Activated CD4-positive, alpha-beta T cell treated with anti-CD3 and anti-CD28 coated beads, Interleukin-2, amount 10 ng/mL, durations not matched to agents 24 days and 14 days (primary cell): ENCODE measurements at regions of chr3 and their contacts with region 1.

Region 1: GRCh38 chr3:130892759-130893375 is 1.0 kb upstream of the ATP2C1 start:
- DNase-seq: peak; percentile 91
- H3K4me3 Mint-ChIP-seq: peak overlapping the region; percentile 97
- H3K27ac Mint-ChIP-seq: peak overlapping the region; percentile 99
- H3K4me1 Mint-ChIP-seq: peaks cover 33% of the 10 kb centered on the region
- H3K27me3 Mint-ChIP-seq: no peaks in the 10 kb centered on the region

Region 2: DNA sequence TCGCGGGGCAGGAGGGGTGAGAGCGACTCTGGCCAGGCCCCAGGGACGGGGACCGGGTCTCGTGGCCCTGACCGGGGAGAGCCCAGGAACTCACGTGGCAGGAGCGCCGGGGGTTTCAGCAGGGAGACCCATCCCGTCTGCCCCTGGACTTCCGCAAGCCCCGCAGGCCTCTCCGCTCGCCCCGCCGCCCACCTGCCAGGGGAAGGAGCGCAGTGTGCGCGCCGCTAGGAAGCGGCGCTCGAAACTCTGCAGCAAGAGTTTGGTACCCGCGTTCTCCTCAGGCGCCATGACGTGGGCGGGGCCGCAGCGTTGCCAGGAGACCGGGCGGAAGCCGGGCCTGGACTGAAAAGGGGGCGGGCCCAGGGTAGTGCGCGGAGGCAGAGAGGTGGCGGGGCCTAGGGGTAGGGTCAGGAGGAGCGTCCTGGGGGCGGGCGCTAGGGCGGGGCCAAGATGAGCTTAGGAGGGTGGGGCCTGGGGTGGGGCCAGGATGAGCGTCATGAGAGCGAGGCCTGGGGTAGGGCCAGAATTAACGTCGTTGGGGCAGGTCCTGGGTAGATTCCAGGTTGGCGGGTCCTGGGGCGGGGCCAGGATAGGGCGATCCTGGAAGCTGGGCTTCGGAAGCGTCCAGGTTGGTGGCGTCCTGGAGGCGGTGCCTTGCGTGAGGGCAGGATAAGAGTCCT is 781.5 kb before region 1 on chr3:
- intact Hi-C with region 1: loop called (anchors 5 kb)
- DNase-seq: peak; percentile 100
- H3K4me3 Mint-ChIP-seq: peak overlapping the region; percentile 97
- H3K27ac Mint-ChIP-seq: peak overlapping the region; percentile 99
- H3K4me1 Mint-ChIP-seq: peaks cover 13% of the 10 kb centered on the region
- H3K27me3 Mint-ChIP-seq: peaks cover 2% of the 10 kb centered on the region

Region 3: GRCh38 chr3:130626049-130626448 is 266.8 kb before region 1 on chr3:
- intact Hi-C with region 1: no loop called
- DNase-seq: no peak
- H3K4me3 Mint-ChIP-seq: no peak overlapping the region
- H3K27ac Mint-ChIP-seq: no peak overlapping the region
- H3K4me1 Mint-ChIP-seq: no peaks in the 10 kb centered on the region
- H3K27me3 Mint-ChIP-seq: no peaks in the 10 kb centered on the region

Region 4: DNA sequence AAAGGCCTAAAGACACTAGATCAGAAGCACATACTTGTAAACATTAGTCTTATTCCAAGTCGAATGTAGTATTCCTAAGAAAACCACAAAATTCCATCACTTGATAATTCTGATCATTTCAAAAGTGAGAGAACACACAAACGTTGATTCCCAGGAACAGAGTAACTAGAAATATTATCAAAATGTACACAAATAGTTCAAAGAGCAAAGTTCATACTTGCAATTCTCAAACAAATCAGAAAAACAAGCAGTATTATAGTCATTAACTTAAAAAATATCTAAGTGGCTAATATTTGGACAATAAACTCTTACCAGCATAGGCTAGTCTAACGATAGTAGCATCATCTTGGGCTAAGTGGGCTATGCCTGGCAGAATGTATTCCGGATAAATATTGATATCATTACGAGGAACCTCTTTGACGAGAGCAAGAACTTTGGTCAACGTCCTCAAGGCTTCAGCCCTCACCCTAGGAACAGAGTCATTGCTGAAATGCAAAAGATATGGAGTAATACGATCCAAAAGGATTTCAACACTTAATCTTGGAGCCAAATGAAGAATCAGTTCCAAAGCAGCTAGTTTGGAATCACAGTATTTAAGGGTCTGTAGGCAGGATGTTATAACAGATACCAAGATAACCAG is 159.5 kb before region 1 on chr3:
- intact Hi-C with region 1: no loop called
- DNase-seq: no peak
- H3K4me3 Mint-ChIP-seq: no peak overlapping the region
- H3K27ac Mint-ChIP-seq: no peak overlapping the region
- H3K4me1 Mint-ChIP-seq: peaks cover 16% of the 10 kb centered on the region
- H3K27me3 Mint-ChIP-seq: no peaks in the 10 kb centered on the region

Region 5: GRCh38 chr3:130746246-130747039 is 146.4 kb before region 1 on chr3 and contains the start of gene PIK3R4:
- intact Hi-C with region 1: loop called (anchors 1 kb)
- DNase-seq: peak; percentile 99
- H3K4me3 Mint-ChIP-seq: peak within 1 kb of the TSS; percentile 90
- H3K27ac Mint-ChIP-seq: peak within 1 kb of the TSS; percentile 96
- H3K4me1 Mint-ChIP-seq: peaks cover 41% of the 10 kb centered on the region
- H3K27me3 Mint-ChIP-seq: no peaks in the 10 kb centered on the region
- total RNA-seq, gene PIK3R4: 30.8 and 34.7 TPM in 2 replicates

Region 6: DNA sequence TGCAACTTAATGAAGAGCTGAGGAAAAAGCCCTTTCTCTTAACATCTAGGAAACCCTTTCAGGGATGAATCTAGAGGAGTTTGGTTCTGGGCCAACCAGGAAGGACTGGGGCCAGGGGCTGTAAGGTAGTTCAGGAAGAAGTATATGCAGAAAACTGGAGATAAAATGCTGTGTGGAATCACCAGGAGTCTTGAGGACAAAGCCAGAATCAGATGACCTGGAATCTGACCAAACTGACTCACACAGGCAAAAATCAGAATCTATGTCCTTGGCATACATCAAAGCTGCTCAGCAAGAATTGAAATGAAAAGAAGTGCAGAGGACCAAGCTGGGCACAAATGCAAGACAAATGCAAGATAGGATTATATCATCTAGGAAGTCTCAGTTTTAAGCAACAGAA is 58.4 kb before region 1 on chr3:
- intact Hi-C with region 1: no loop called
- DNase-seq: no peak
- H3K4me3 Mint-ChIP-seq: no peak overlapping the region
- H3K27ac Mint-ChIP-seq: no peak overlapping the region
- H3K4me1 Mint-ChIP-seq: peaks cover 2% of the 10 kb centered on the region
- H3K27me3 Mint-ChIP-seq: peaks cover 22% of the 10 kb centered on the region

Region 7: GRCh38 chr3:130850044-130850797 is 42.6 kb before region 1 on chr3:
- intact Hi-C with region 1: loop called (anchors 1 kb)
- DNase-seq: peak; percentile 87
- H3K4me3 Mint-ChIP-seq: peak overlapping the region; percentile 64
- H3K27ac Mint-ChIP-seq: peak overlapping the region; percentile 75
- H3K4me1 Mint-ChIP-seq: peaks cover 26% of the 10 kb centered on the region
- H3K27me3 Mint-ChIP-seq: peaks cover 34% of the 10 kb centered on the region

Region 8: DNA sequence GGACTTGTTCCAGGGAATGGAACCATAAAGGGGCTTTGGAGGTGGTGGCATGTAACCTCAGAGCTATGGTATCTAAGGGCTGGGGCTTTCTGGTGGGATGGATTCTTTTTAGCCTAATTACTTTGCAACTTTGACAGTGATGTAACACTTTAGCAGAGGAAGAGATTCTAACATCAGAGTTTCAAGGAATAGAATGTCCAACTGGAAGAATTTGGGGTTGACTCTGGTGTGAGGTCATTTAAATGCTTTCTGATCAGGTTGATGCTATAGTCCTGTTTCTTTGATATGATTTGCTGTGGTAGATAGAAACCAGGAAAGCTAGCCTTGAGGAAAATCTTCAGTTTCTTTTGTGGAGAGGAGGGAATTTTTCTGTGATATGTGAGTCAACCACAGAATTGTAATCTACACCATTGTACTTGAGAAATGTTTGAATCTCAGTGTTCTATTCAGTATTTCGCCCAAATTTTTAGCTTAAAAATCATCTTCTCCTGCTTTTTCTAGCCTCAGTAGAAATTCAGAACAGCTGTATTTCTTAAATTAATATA is 41.0 kb after region 1 on chr3:
- intact Hi-C with region 1: loop called (anchors 5 kb)
- DNase-seq: no peak
- H3K4me3 Mint-ChIP-seq: no peak overlapping the region
- H3K27ac Mint-ChIP-seq: no peak overlapping the region
- H3K4me1 Mint-ChIP-seq: peaks cover 14% of the 10 kb centered on the region
- H3K27me3 Mint-ChIP-seq: no peaks in the 10 kb centered on the region

Region 9: GRCh38 chr3:130971208-130971607 is 78.3 kb after region 1 on chr3:
- intact Hi-C with region 1: loop called (anchors 5 kb)
- DNase-seq: no peak
- H3K4me3 Mint-ChIP-seq: no peak overlapping the region
- H3K27ac Mint-ChIP-seq: peak overlapping the region; percentile 61
- H3K4me1 Mint-ChIP-seq: peaks cover 10% of the 10 kb centered on the region
- H3K27me3 Mint-ChIP-seq: no peaks in the 10 kb centered on the region

Region 10: GRCh38 chr3:131381444-131382291 is 488.8 kb after region 1 on chr3 and contains the start of gene NUDT16:
- intact Hi-C with region 1: loop called (anchors 1 kb)
- DNase-seq: peak; percentile 100
- H3K4me3 Mint-ChIP-seq: peak within 1 kb of the TSS; percentile 95
- H3K27ac Mint-ChIP-seq: peak within 1 kb of the TSS; percentile 95
- H3K4me1 Mint-ChIP-seq: peaks cover 38% of the 10 kb centered on the region
- H3K27me3 Mint-ChIP-seq: no peaks in the 10 kb centered on the region
- total RNA-seq, gene NUDT16: 8.4 TPM in 2 replicates